GM12878 (cell line): ENCODE measurements at regions of chr10 and their contacts with region 1.

Region 1: DNA sequence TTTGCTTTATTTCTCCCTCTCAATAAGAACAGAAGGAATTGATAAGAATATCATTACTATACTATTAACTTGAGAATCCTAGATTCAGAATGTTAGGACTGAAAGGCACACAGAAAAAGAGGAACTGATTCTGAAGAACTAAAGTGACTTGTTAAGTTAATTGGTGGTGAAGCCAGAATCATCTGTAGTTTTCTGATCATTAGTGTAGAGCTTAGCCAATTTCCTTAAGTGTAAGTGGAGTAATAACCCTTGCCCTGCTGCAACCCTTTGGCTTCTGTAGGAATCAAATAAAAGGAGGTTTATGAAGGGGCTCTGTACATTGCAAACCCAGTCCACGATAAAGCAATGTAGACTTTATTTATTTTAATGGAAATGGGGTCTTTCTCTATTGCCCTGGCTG is 1186.0 kb downstream of the SORCS3 start:
- DNase-seq: no peak
- ATAC-seq: peak; percentile 97
- H3K4me3 ChIP-seq: no peak overlapping the region
- H3K27ac ChIP-seq: no peak overlapping the region
- H3K4me1 ChIP-seq: no peaks in the 10 kb centered on the region
- H3K27me3 ChIP-seq: no peaks in the 10 kb centered on the region
- CTCF ChIP-seq: no peak
- EP300 ChIP-seq: peak in 1 of 2 experiments; percentile 58; a peak in 2 of 4 replicates
- POLR2A ChIP-seq: no peak
- RAD21 ChIP-seq: no peak

Region 2: GRCh38 chr10:105837951-105838350 is 10.8 kb after region 1 on chr10:
- CTCF ChIA-PET with region 1: no interaction called
- POLR2A ChIA-PET with region 1: interaction called, 3 read pairs
- RAD21 ChIA-PET with region 1: interaction called, 12 read pairs
- SMC1A ChIA-PET with region 1: interaction called, 21 read pairs
- in situ Hi-C with region 1: no loop called
- intact Hi-C with region 1: no loop called
- DNase-seq: peak; percentile 52
- ATAC-seq: peak; percentile 90
- H3K4me3 ChIP-seq: peak overlapping the region; percentile 15; the same call in 1 of the 2 replicates
- H3K27ac ChIP-seq: no peak overlapping the region
- H3K4me1 ChIP-seq: no peaks in the 10 kb centered on the region
- H3K27me3 ChIP-seq: no peaks in the 10 kb centered on the region
- CTCF ChIP-seq: no peak
- EP300 ChIP-seq: no peak
- POLR2A ChIP-seq: no peak
- RAD21 ChIP-seq: no peak